ENCODE measurements at regions of chr11 and their contacts with region 1.

Region 1: DNA sequence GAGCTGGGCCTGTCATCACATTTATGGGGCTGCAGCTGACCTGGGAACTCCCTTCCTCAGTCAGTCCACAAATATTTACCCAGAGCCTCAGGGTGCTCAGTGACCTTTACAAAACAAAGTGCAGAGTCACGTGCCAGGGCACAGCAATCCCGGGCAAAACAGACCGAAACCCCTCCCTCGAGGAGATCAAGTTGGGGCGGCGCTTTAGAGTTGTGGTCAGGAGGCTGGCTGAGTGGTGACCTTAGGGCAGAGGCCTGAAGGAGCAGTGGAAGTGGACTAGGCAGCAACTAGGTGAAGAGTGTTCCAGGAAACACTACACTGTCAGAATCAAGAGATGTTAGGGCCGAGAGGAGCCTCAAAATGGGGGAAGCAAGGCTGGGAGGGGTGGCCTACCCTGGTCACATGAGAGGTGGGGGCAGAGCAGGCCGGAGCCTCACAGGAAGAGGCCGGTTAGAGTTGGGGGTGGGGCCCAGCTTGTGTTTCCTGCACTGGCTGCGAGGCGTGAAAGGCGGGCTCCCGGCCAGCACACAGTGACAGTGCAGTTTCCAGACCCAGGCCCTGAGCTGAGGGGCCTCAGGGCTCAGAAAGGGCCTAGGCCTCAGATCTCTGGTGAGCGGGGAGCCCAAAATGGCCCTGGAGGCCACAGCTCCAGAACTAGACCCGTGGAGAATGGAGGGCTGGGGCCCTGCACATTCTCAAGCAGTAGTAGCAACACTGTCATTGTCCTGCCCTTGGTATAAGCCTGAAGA is 3.7 kb upstream of the NEAT1 start:
- DNase-seq: peak; percentile 97 to 99
- ATAC-seq: peak; percentile 23 to 35
- H3K4me3 ChIP-seq: peak overlapping the region; percentile 55 to 92 (median 64)
- H3K27ac ChIP-seq: peak overlapping the region; percentile 98 to 100 (median 100)
- H3K4me1 ChIP-seq: peaks cover 37 to 60% of the 10 kb centered on the region in 2 donors
- H3K27me3 ChIP-seq: no peaks in the 10 kb centered on the region
- CTCF ChIP-seq: no peak
- POLR2A ChIP-seq: no peak

Region 2: GRCh38 chr11:65274735-65275682 is 143.9 kb before region 1 on chr11:
- in situ Hi-C with region 1: no loop called
- intact Hi-C with region 1: no loop called
- DNase-seq: peak; percentile 69 to 73
- ATAC-seq: peak; percentile 87 to 92
- H3K4me3 ChIP-seq: no peak overlapping the region
- H3K27ac ChIP-seq: peak overlapping the region in 2 of 4 donors; percentile 22 to 30
- H3K4me1 ChIP-seq: peaks cover 0 to 5% of the 10 kb centered on the region in 2 donors
- H3K27me3 ChIP-seq: no peaks in the 10 kb centered on the region
- CTCF ChIP-seq: peak; percentile 79 to 93 (median 90)
- POLR2A ChIP-seq: no peak

Region 3: GRCh38 chr11:65287601-65288000 is 131.3 kb before region 1 on chr11:
- in situ Hi-C with region 1: no loop called
- intact Hi-C with region 1: no loop called
- DNase-seq: no peak
- ATAC-seq: no peak
- H3K4me3 ChIP-seq: no peak overlapping the region
- H3K27ac ChIP-seq: no peak overlapping the region
- H3K4me1 ChIP-seq: peaks cover 16 to 30% of the 10 kb centered on the region in 2 donors
- H3K27me3 ChIP-seq: no peaks in the 10 kb centered on the region
- CTCF ChIP-seq: no peak
- POLR2A ChIP-seq: no peak

Region 4: DNA sequence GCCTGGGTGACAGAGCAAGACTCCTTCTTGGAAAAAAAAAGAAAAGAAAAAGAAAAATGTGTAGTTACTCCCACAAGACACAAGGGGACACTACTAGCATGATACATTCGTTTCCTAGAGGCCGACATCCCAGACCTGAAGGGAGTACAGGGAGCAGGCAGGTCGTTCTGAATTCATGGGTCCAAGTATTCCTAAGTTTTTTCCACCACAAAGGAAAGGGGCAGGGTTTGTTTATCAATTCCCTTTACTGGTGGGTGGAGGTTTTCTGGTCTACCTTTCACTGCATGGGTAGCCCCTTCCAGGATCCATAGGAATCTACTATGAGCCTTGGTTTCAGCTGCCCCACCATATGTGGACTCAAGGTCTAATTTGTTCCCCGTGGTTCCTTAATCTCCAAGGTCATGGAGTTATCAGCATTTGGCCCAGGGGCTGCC is 52.5 kb before region 1 on chr11:
- in situ Hi-C with region 1: loop called in 1 of 4 experiments (anchors 10 kb)
- intact Hi-C with region 1: loop called (anchors 1 kb)
- DNase-seq: peak in 1 of 2 donors; percentile 57
- ATAC-seq: peak; percentile 67
- H3K4me3 ChIP-seq: no peak overlapping the region
- H3K27ac ChIP-seq: peak overlapping the region; percentile 61 to 78 (median 70)
- H3K4me1 ChIP-seq: peaks cover 21 to 22% of the 10 kb centered on the region in 2 donors
- H3K27me3 ChIP-seq: no peaks in the 10 kb centered on the region
- CTCF ChIP-seq: peak; percentile 86 to 91 (median 87)
- POLR2A ChIP-seq: no peak

Region 5: GRCh38 chr11:65454696-65455456 is 36.0 kb after region 1 on chr11:
- in situ Hi-C with region 1: loop called in 1 of 4 experiments (anchors 10 kb)
- intact Hi-C with region 1: loop called (anchors 2 kb)
- DNase-seq: peak; percentile 88 to 94
- ATAC-seq: peak; percentile 80 to 88
- H3K4me3 ChIP-seq: peak overlapping the region; percentile 55 to 74 (median 58)
- H3K27ac ChIP-seq: peak overlapping the region; percentile 87 to 93 (median 90)
- H3K4me1 ChIP-seq: peaks cover 12 to 16% of the 10 kb centered on the region in 2 donors
- H3K27me3 ChIP-seq: no peaks in the 10 kb centered on the region
- CTCF ChIP-seq: no peak
- POLR2A ChIP-seq: peak; percentile 83 to 95

Region 6: DNA sequence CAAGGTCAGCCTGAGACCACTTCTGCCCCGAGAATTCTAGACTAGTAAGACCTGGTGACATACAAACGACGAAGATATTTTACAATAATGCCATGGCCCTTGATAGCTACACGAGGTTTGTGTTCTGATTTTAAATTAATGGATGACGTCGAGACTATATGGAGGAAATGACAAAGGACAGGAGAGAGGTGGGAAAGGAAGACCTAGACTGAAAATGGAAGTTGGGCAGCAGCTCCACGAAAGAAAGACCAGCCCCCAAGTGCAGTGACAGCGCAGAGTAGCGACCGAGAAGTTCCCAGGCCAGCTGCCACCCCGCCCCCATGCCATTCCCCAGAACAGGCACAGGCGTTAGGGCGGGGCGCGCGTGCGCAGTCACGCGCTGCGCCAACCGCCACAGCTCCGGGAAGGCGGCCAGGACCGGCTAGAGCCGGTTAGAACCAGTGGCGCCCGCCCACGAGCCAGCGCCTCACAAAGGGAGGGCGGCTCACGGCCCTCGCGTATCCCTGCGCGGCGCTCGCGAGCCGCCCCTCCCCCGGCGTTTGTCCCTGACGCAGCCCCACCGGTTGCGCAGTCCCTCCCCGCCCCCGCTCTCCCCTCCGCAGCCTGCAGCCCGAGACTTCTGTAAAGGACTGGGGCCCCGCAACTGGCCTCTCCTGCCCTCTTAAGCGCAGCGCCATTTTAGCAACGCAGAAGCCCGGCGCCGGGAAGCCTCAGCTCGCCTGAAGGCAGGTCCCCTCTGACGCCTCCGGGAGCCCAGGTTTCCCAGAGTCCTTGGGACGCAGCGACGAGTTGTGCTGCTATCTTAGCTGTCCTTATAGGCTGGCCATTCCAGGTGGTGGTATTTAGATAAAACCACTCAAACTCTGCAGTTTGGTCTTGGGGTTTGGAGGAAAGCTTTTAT is 78.5 kb after region 1 on chr11:
- in situ Hi-C with region 1: loop called in 1 of 4 experiments (anchors 10 kb)
- intact Hi-C with region 1: loop called (anchors 1 kb)
- DNase-seq: peak; percentile 98 to 99
- ATAC-seq: peak; percentile 51 to 57
- H3K4me3 ChIP-seq: peak overlapping the region; percentile 81 to 93 (median 91)
- H3K27ac ChIP-seq: peak overlapping the region; percentile 93 to 99 (median 96)
- H3K4me1 ChIP-seq: peaks cover 43 to 47% of the 10 kb centered on the region in 2 donors
- H3K27me3 ChIP-seq: no peaks in the 10 kb centered on the region
- CTCF ChIP-seq: peak in 1 of 5 experiments; percentile 46
- POLR2A ChIP-seq: peak in 1 of 2 donors; percentile 96

Region 7: DNA sequence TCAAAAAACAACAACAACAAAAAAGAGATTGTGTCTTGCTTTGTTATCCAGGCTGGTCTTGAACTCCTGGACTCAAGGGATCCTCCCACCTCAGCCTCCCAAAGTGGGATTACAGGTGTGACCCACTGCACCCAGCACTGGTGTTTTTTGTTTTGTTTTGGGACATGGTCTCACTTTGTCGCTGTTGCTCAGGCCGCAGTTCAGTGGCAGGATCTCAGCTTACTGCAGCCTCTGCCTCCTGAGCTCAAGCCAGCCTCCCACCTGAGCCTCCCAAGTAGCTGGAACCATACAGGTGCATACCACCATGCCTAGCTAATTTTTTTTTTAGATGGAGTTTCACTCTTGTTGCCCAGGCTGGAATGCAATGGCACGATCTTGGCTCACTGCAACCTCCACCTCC is 93.4 kb after region 1 on chr11:
- in situ Hi-C with region 1: loop called (anchors 5 to 10 kb)
- intact Hi-C with region 1: loop called (anchors 1 kb)
- DNase-seq: no peak
- ATAC-seq: no peak
- H3K4me3 ChIP-seq: no peak overlapping the region
- H3K27ac ChIP-seq: no peak overlapping the region
- H3K4me1 ChIP-seq: peaks cover 9 to 17% of the 10 kb centered on the region in 2 donors
- H3K27me3 ChIP-seq: no peaks in the 10 kb centered on the region
- CTCF ChIP-seq: no peak
- POLR2A ChIP-seq: no peak

Region 8: GRCh38 chr11:65575568-65576231 is 156.8 kb after region 1 on chr11 and contains the start of gene EHBP1L1:
- in situ Hi-C with region 1: no loop called
- intact Hi-C with region 1: loop called (anchors 1 kb)
- DNase-seq: peak in 1 of 2 donors; percentile 73
- ATAC-seq: peak; percentile 13
- H3K4me3 ChIP-seq: peak within 1 kb of the TSS; percentile 65 to 97 (median 80)
- H3K27ac ChIP-seq: peak within 1 kb of the TSS; percentile 100
- H3K4me1 ChIP-seq: peaks cover 64 to 75% of the 10 kb centered on the region in 2 donors
- H3K27me3 ChIP-seq: no peaks in the 10 kb centered on the region
- CTCF ChIP-seq: no peak
- POLR2A ChIP-seq: peak; percentile 82 to 85
- total RNA-seq, gene EHBP1L1: 191 to 374 (median 250) TPM

Measured in gastrocnemius medialis (tissue), 4 donors.